Posterior cingulate gyrus (tissue), 11 donors: ENCODE measurements at regions of chr3 and their contacts with region 1.

Region 1: DNA sequence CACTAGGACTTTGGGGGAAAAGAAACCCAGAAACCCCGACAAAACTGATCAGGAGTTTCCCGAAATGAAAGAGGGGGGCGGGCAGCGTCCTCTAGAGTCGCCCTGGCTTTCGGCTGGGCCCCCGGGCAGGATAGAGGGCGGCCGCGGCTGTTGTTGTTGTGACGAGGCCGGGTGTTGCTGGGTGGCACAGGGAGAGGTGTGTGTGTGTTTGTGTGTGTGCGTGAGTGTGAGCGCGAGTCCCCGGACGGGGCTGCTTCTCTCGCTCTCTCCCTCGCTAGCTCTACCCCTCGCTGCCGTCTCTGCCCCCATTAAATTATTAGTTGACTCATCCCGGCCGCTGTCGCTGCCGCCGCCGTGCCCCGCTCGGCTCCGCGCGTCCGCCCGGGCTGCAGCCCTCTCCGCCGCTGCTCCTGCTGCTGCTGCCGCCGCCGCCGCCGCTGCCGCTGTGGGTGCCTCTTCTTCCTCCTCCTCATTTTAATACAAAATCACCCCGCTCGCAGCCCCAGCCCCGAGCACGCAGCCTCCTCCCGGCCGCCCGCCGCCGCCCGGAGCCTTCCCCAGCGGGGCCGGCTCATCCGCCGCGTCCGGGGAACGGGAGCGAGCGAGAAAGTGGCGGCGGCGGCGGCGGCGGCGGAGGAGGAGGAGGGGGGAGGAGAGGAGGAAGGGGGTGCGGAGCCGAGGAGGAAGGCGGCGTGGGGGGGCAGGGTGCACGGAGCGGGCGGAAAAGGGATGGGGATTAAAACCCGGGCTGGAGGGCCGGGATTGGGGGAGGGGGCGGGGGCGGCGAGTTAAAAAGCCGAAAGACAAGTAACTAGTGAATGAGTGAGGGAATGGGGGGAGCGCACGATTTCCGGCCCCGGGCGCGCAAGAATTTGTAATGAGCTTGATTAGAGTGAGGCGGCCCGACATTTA is at the start of gene SATB1:
- DNase-seq: peak; percentile 60 to 96 (median 76)

Region 2: GRCh38 chr3:18445401-18446148 is 20.6 kb after region 1 on chr3:
- intact Hi-C with region 1: loop called (anchors 2 kb)
- DNase-seq: peak in 4 of 10 donors; percentile 15 to 81 (median 70)

Region 3: DNA sequence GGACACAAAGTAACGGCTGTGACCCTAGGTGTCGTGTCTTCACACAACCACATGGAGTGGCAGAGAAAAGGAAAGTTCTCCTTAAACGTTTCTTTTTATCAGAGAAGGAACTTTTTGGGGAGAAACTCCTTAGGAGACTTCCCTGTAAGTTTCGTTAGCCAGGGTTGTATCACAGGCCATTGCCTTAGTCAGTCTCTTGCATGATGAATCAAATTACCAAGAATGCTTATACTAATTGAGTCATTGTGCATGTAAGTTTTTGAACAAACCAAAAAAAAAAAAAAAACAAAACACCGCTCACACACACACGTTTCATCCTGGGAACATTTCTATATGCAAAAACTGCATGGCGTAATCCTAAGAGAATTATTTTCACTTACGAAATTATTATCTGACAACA is 150.6 kb after region 1 on chr3:
- intact Hi-C with region 1: no loop called
- DNase-seq: no peak

Region 4: GRCh38 chr3:18679238-18679637 is 254.3 kb after region 1 on chr3:
- intact Hi-C with region 1: no loop called
- DNase-seq: no peak